ENCODE measurements at regions of chr6 and their contacts with region 1.

Region 1: DNA sequence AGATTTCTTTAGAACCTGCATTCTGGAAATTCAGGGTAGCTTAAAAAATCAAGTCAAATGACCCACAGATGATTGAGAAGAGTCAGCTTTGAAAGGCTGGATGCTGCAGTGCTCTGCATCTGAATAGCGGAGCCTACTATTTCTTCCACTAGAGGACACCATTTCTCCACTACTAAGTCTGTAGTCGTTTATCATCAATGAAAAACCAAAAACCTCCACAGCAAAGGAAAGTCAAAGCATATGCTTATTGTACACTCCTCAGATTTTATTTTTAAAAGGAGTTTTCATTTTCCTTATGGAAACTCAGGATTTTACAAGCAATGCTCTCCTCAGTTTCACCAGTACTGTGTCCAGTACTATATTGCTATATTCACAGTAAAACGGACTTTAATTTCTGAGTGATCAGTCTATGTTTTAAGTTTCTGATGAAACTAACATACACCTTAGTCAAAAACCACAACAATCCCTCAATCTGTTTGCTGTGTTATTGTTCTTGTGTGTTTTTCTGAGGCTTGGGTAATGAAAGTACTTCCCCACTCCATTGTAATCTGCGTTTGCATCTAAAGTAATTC is 50.5 kb upstream of the ENPP5 start:
- DNase-seq: no peak
- H3K4me3 ChIP-seq: no peak overlapping the region
- H3K27ac ChIP-seq: peak overlapping the region in 34 of 59 donors; percentile 0 to 83 (median 31)
- H3K27me3 ChIP-seq: no peaks in the 10 kb centered on the region
- CTCF ChIP-seq: peak; percentile 52 to 99 (median 92)

Region 2: GRCh38 chr6:46090115-46091079 is 130.9 kb before region 1 on chr6:
- intact Hi-C with region 1: loop called (anchors 5 kb)
- DNase-seq: peak; percentile 50 to 75 (median 62)
- H3K4me3 ChIP-seq: no peak overlapping the region
- H3K27ac ChIP-seq: no peak overlapping the region
- H3K27me3 ChIP-seq: no peaks in the 10 kb centered on the region
- CTCF ChIP-seq: peak; percentile 83 to 98 (median 92)

Region 3: DNA sequence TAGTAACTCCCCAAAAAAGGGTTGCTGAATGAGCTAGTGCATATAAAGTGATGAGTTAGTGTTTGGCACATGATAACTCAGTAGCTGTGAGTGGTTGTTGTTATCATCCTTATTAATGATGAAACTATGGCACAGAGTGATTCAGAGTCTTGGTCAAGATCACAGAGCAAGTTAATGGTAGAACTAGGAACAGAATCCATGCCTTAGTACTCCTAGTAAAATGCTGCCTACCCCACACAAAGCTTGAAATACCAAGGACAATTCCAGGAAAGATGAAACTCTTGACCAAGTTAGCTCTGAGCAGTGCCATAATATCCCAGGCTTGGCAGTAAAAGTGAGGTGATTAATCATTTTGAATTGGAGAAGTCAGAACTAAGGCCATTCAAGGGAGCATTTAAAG is 58.6 kb after region 1 on chr6:
- intact Hi-C with region 1: loop called in 1 of 2 experiments (anchors 5 kb)
- DNase-seq: no peak
- H3K4me3 ChIP-seq: no peak overlapping the region
- H3K27ac ChIP-seq: peak overlapping the region in 1 of 59 donors; percentile 18
- H3K27me3 ChIP-seq: no peaks in the 10 kb centered on the region
- CTCF ChIP-seq: no peak

Region 4: GRCh38 chr6:46410334-46410953 is 189.1 kb after region 1 on chr6:
- intact Hi-C with region 1: loop called (anchors 1 to 2 kb)
- DNase-seq: peak in 3 of 10 donors; percentile 27 to 30 (median 28)
- H3K4me3 ChIP-seq: no peak overlapping the region
- H3K27ac ChIP-seq: peak overlapping the region in 47 of 59 donors; percentile 4 to 86 (median 61)
- H3K27me3 ChIP-seq: no peaks in the 10 kb centered on the region
- CTCF ChIP-seq: peak; percentile 53 to 99 (median 90)

Region 5: DNA sequence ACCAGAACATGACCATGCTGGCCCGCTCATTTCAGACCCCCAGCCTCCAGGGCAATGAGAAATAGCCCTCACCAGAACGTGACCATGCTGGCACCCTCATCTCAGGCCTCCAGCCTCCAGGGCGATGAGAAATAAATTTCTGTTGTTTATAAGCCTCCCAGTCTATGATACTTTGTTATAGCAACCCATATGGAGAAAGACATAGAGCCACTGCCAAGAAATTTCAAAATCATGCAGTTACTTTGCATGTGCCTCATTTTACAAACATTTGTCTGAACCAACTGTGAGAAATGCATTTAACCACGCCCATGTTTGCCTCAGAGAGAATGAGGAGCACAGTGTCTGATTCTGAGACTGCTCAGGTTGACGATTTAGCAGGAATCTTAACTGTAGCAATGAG is 415.8 kb after region 1 on chr6:
- intact Hi-C with region 1: loop called in 1 of 2 experiments (anchors 10 kb)
- DNase-seq: no peak
- H3K4me3 ChIP-seq: no peak overlapping the region
- H3K27ac ChIP-seq: no peak overlapping the region
- H3K27me3 ChIP-seq: no peaks in the 10 kb centered on the region
- CTCF ChIP-seq: no peak